Activated CD4-positive, alpha-beta T cell treated with anti-CD3 and anti-CD28 coated beads, Interleukin-2, amount 10 ng/mL, durations not matched to agents 24 days and 14 days (primary cell): ENCODE measurements at regions of chr6 and their contacts with region 1.

Region 1: DNA sequence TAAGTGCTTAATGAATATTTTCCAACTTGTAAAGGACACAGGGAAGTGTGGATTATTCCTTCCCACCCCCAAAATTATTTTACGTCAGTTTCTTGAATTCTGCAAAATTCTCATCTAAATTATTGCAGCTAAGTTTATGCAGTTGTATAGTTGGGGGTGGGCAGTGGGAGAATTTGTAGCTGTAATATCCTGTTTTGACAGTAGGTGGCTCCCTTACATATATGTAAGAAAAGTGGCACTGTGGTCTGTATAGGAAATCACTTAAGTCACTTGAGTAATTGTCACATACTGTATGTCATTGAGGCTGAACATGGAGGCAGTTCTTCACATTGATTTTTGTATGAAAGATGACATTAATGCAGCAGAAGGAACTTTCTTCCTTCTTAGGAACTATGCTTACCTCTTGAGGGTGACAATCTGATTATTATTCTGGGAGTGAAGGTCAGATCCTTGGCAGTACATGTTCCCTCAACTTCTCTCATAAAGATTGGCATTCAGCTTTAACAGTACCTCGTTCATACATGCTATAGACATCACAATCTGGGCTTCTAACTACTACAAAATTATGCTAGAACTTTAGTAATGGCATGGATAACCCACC is 14.7 kb upstream of the CFAP206 start:
- DNase-seq: peak; percentile 82
- H3K4me3 Mint-ChIP-seq: no peak overlapping the region
- H3K27ac Mint-ChIP-seq: no peak overlapping the region
- H3K4me1 Mint-ChIP-seq: no peaks in the 10 kb centered on the region
- H3K27me3 Mint-ChIP-seq: no peaks in the 10 kb centered on the region

Region 2: DNA sequence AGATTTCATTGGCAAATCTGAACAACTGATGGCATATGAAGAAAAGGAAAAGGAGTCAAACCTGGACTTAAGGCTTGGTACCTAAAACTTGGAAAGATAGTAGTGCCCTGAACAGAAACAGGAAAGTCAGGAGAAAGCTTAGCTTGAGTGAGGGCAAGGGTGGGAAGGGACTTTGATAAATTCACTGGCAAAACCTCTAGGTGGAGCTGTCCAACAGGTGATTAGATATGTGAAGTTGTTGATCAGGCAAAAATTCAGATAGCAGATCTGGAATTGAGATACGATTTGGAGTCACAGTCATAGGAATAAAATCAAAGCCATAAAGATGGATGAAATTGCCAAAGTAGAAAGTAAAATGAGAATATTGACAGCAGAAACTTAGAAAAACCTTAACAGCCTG is 253.9 kb before region 1 on chr6:
- intact Hi-C with region 1: loop called (anchors 2 kb)
- DNase-seq: peak; percentile 86
- H3K4me3 Mint-ChIP-seq: no peak overlapping the region
- H3K27ac Mint-ChIP-seq: no peak overlapping the region
- H3K4me1 Mint-ChIP-seq: peaks cover 2% of the 10 kb centered on the region
- H3K27me3 Mint-ChIP-seq: peaks cover 49% of the 10 kb centered on the region

Region 3: DNA sequence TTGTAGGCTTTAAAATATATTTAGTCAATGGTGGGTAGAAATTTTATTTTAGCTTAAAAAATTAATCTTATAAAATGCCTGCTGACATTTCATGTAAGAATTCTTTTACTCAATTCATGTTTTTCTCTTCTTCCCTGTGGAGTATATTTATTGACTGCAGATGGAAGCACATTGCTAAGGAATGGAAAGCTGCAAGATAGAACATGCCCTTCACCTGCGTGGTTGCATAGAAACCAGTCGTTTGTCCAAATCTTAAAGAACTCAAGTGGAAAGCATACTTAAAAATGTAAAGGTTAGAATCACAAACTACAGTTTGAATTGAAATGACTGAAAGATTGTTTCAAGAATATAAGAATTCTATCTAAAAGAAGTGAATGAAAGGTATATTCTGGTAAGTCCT is 17.8 kb before region 1 on chr6:
- intact Hi-C with region 1: no loop called
- DNase-seq: no peak
- H3K4me3 Mint-ChIP-seq: no peak overlapping the region
- H3K27ac Mint-ChIP-seq: no peak overlapping the region
- H3K4me1 Mint-ChIP-seq: peaks cover 8% of the 10 kb centered on the region
- H3K27me3 Mint-ChIP-seq: no peaks in the 10 kb centered on the region

Region 4: DNA sequence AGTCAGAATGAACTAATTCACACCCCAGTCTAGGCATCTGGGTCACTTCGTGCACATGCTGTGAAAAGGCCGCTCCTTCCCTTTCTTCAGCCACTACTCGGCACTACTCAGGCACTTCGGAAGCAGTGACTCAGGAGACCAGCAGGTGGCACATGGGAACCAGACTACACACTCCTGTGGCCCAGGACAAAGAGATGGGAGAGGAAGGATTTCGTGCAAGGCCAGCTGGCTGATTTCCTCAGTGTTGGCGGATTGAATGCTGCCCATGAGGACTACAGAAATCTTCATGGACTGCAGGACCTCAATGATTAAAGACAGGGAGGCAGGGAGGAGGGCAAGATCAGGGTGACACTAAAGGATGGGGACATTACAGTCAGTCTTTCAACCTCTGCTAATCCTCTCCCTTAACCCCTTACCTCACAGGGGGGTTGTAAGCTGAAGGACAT is 536.7 kb after region 1 on chr6:
- intact Hi-C with region 1: loop called (anchors 5 kb)
- DNase-seq: peak; percentile 85
- H3K4me3 Mint-ChIP-seq: no peak overlapping the region
- H3K27ac Mint-ChIP-seq: no peak overlapping the region
- H3K4me1 Mint-ChIP-seq: no peaks in the 10 kb centered on the region
- H3K27me3 Mint-ChIP-seq: peaks cover 9% of the 10 kb centered on the region

Region 5: GRCh38 chr6:88780714-88781389 is 1387.7 kb after region 1 on chr6:
- intact Hi-C with region 1: loop called (anchors 2 kb)
- DNase-seq: peak; percentile 85
- H3K4me3 Mint-ChIP-seq: no peak overlapping the region
- H3K27ac Mint-ChIP-seq: no peak overlapping the region
- H3K4me1 Mint-ChIP-seq: peaks cover 3% of the 10 kb centered on the region
- H3K27me3 Mint-ChIP-seq: no peaks in the 10 kb centered on the region